Heart left ventricle (tissue), 16 donors: ENCODE measurements at regions of chr5 and their contacts with region 1.

Region 1: DNA sequence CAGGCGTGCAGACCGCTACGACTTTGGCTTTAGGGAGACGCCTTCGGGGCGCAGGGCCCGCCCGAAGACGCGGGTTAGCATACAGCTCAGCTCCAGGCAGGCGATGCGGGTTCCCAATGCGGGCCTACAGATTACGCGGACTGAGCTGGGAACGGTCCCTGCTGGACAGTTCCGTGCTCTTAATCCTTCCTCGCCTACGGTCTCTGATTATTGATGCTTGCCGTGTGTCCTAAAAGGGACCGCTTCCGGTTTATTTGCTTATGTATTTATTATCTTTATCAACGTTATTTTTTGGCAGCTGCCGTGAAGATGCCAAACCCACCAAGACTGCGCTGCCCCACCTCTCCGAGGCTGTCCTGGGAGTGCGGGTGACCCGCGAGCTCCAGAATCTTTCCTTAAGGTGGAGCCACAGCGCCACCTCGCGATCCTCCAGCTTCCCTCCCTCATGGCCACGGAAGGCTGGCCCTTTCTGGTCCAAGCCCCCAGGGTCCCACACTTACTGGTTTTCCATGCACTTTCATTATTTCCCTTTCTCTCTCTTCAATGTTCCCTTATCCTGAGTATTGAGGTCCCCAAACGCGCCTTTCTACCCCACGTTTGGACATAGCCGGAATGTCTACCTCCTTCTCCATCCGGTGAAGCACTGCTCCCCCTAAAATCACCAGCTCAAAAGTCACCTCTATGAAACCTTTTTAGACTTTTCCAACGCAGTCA is 7.0 kb upstream of the EBF1 start:
- DNase-seq: peak; percentile 73 to 85 (median 81)
- ATAC-seq: peak; percentile 79 to 92 (median 92)
- H3K4me3 ChIP-seq: peak overlapping the region; percentile 11 to 56 (median 44)
- H3K27ac ChIP-seq: peak overlapping the region in 3 of 12 donors; percentile 8 to 51 (median 36)
- H3K4me1 ChIP-seq: peaks cover 0 to 42% (median 13%) of the 10 kb centered on the region in 12 donors
- H3K27me3 ChIP-seq: peaks cover 0 to 65% (median 19%) of the 10 kb centered on the region in 9 donors
- CTCF ChIP-seq: peak; percentile 83 to 98 (median 95)
- POLR2A ChIP-seq: no peak

Region 2: GRCh38 chr5:157820593-157821252 is 1286.0 kb before region 1 on chr5:
- intact Hi-C with region 1: loop called in 4 of 10 experiments (anchors 5 to 10 kb)
- DNase-seq: peak in 1 of 5 donors; percentile 22
- ATAC-seq: peak in 1 of 4 donors; percentile 58
- H3K4me3 ChIP-seq: no peak overlapping the region
- H3K27ac ChIP-seq: peak overlapping the region in 5 of 12 donors; percentile 23 to 72 (median 32)
- H3K4me1 ChIP-seq: peaks cover 0 to 54% (median 29%) of the 10 kb centered on the region in 12 donors
- H3K27me3 ChIP-seq: no peaks in the 10 kb centered on the region
- CTCF ChIP-seq: peak; percentile 30 to 70 (median 54)
- POLR2A ChIP-seq: no peak

Region 3: GRCh38 chr5:158074992-158075769 is 1031.5 kb before region 1 on chr5:
- intact Hi-C with region 1: loop called (anchors 2 to 10 kb)
- DNase-seq: peak; percentile 30 to 61 (median 57)
- ATAC-seq: peak in 3 of 4 donors; percentile 82 to 86 (median 83)
- H3K4me3 ChIP-seq: peak overlapping the region in 11 of 12 donors; percentile 2 to 44 (median 27)
- H3K27ac ChIP-seq: peak overlapping the region in 7 of 12 donors; percentile 28 to 60 (median 48)
- H3K4me1 ChIP-seq: peaks cover 0 to 10% (median 5%) of the 10 kb centered on the region in 12 donors
- H3K27me3 ChIP-seq: no peaks in the 10 kb centered on the region
- CTCF ChIP-seq: peak; percentile 73 to 92 (median 84)
- POLR2A ChIP-seq: no peak

Region 4: GRCh38 chr5:158521995-158522394 is 584.7 kb before region 1 on chr5:
- intact Hi-C with region 1: loop called in 2 of 10 experiments (anchors 10 kb)
- DNase-seq: no peak
- ATAC-seq: peak in 1 of 4 donors; percentile 61
- H3K4me3 ChIP-seq: no peak overlapping the region
- H3K27ac ChIP-seq: peak overlapping the region in 9 of 12 donors; percentile 20 to 80 (median 45)
- H3K4me1 ChIP-seq: peaks cover 0 to 31% (median 7%) of the 10 kb centered on the region in 12 donors
- H3K27me3 ChIP-seq: no peaks in the 10 kb centered on the region
- CTCF ChIP-seq: no peak
- POLR2A ChIP-seq: no peak

Region 5: DNA sequence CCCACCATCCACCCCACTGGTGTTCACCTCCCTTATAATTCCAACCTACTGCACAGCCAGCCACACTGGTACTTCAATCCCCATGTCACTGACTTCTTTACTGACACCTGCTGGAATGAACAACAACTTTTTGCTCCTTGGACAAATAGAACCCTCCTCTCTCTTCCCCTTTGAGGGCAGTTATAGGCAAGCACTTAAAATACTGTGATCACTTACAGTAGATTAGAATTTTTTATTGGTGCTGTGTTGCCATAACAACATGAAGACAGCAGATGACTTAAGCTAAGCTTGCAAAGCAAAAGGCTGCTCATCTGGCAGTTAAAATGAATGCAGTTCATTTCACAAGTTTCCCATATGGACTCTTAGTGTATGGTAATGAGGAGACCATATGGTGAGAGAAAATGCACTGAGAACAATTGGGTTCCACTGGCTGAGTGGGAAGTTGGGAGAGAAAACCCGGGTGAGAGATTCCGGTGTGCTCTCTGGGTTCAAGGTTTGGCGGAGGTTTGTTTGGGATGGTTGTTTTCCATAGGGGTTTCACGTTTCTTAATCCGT is 381.4 kb before region 1 on chr5:
- intact Hi-C with region 1: loop called in 1 of 10 experiments (anchors 10 kb)
- DNase-seq: no peak
- ATAC-seq: no peak
- H3K4me3 ChIP-seq: no peak overlapping the region
- H3K27ac ChIP-seq: peak overlapping the region in 1 of 12 donors; percentile 3
- H3K4me1 ChIP-seq: peaks cover 0 to 59% (median 18%) of the 10 kb centered on the region in 12 donors
- H3K27me3 ChIP-seq: no peaks in the 10 kb centered on the region
- CTCF ChIP-seq: no peak
- POLR2A ChIP-seq: no peak